Right lobe of liver (tissue), 6 donors: ENCODE measurements at regions of chr4 and their contacts with region 1.

Region 1: DNA sequence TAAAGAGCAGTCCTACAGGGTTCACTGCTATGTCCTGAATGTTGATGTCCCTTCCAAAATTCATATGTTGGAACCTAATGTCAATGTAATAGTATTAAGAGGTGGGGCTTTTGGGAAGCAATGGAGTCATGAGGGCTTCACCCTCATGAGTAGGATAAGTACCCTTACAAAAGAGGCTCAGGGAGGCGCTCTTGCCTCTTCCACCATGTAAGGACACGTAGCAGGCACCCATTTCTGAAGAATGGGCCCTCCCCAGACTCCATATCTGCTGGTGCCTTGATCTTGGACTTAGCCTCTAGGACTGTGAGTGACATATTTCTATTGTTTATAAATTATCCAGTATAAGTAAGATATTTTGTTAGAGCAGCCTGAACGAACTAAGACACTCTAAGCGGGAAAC is 15.8 kb downstream of the MED28 start:
- DNase-seq: no peak
- ATAC-seq: no peak
- H3K4me3 ChIP-seq: no peak overlapping the region
- H3K27ac ChIP-seq: no peak overlapping the region
- H3K4me1 ChIP-seq: no peaks in the 10 kb centered on the region
- H3K27me3 ChIP-seq: no peaks in the 10 kb centered on the region
- CTCF ChIP-seq: no peak
- POLR2A ChIP-seq: no peak

Region 2: DNA sequence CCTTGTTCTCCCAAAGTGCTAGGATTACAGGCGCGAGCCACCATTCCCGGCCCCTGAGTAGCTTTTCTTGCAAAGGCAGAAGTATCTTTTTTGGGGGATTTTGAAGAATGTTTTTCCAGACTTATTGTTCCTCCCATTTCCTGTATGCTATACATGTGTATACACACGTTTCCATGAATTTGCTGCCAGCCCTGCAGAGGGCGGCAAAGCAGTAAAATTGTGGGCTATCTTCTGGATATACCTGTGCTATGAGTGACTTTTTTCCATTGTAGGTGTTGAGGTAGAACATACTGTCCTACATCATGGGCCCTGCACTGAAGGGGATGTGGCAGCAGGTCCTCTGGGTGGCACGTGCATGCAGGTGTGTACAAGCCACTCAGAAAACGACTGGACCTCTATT is 32.7 kb before region 1 on chr4:
- intact Hi-C with region 1: loop called in 1 of 2 experiments (anchors 5 kb)
- DNase-seq: no peak
- ATAC-seq: peak in 3 of 4 donors; percentile 26 to 63 (median 33)
- H3K4me3 ChIP-seq: no peak overlapping the region
- H3K27ac ChIP-seq: no peak overlapping the region
- H3K4me1 ChIP-seq: no peaks in the 10 kb centered on the region
- H3K27me3 ChIP-seq: no peaks in the 10 kb centered on the region
- CTCF ChIP-seq: peak in 3 of 4 donors; percentile 9 to 20 (median 11)
- POLR2A ChIP-seq: no peak

Region 3: DNA sequence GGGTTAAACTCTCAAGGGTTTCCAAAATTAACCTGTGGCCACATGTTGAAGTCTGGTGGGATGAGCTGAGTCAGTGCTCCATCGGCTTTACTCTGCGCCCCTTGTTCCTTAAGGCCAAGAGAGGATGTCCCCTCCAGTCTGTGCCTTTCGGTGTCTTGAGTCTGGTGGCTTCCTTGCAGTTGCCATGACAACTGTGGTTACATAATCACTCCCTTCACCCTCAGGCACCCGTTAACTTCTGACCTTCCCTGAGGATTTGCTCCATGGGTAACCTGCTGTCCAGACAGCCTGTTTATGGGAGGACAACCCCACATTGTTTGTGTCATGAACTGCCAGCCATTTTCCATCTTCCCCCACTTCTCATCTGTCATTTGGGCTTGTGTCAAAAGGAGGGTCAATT is 792.4 kb after region 1 on chr4:
- intact Hi-C with region 1: no loop called
- DNase-seq: no peak
- ATAC-seq: no peak
- H3K4me3 ChIP-seq: no peak overlapping the region
- H3K27ac ChIP-seq: no peak overlapping the region
- H3K4me1 ChIP-seq: no peaks in the 10 kb centered on the region
- H3K27me3 ChIP-seq: no peaks in the 10 kb centered on the region
- CTCF ChIP-seq: no peak
- POLR2A ChIP-seq: no peak